ENCODE measurements at regions of chr2 and their contacts with region 1.

Region 1: GRCh38 chr2:122079844-122080243 is 324.4 kb downstream of the TSN start:
- DNase-seq: no peak
- H3K4me3 ChIP-seq: no peak overlapping the region
- H3K27ac ChIP-seq: no peak overlapping the region
- H3K4me1 ChIP-seq: no peaks in the 10 kb centered on the region
- H3K27me3 ChIP-seq: no peaks in the 10 kb centered on the region
- CTCF ChIP-seq: no peak
- EP300 ChIP-seq: no peak
- POLR2A ChIP-seq: no peak

Region 2: GRCh38 chr2:121897335-121897970 is 182.4 kb before region 1 on chr2:
- in situ Hi-C with region 1: no loop called
- intact Hi-C with region 1: no loop called
- DNase-seq: no peak
- H3K4me3 ChIP-seq: no peak overlapping the region
- H3K27ac ChIP-seq: no peak overlapping the region
- H3K4me1 ChIP-seq: peaks cover 0 to under 1% (median 0%) of the 10 kb centered on the region in 4 donors
- H3K27me3 ChIP-seq: no peaks in the 10 kb centered on the region
- CTCF ChIP-seq: peak in 4 of 5 experiments; percentile 23 to 42 (median 33)
- EP300 ChIP-seq: no peak
- POLR2A ChIP-seq: no peak

Region 3: GRCh38 chr2:122034777-122035176 is 45.1 kb before region 1 on chr2:
- in situ Hi-C with region 1: no loop called
- intact Hi-C with region 1: loop called (anchors 1 kb)
- DNase-seq: no peak
- H3K4me3 ChIP-seq: no peak overlapping the region
- H3K27ac ChIP-seq: no peak overlapping the region
- H3K4me1 ChIP-seq: no peaks in the 10 kb centered on the region
- H3K27me3 ChIP-seq: no peaks in the 10 kb centered on the region
- CTCF ChIP-seq: no peak
- EP300 ChIP-seq: no peak
- POLR2A ChIP-seq: no peak